GM12878 (cell line): ENCODE measurements at regions of chr3 and their contacts with region 1.

Region 1: DNA sequence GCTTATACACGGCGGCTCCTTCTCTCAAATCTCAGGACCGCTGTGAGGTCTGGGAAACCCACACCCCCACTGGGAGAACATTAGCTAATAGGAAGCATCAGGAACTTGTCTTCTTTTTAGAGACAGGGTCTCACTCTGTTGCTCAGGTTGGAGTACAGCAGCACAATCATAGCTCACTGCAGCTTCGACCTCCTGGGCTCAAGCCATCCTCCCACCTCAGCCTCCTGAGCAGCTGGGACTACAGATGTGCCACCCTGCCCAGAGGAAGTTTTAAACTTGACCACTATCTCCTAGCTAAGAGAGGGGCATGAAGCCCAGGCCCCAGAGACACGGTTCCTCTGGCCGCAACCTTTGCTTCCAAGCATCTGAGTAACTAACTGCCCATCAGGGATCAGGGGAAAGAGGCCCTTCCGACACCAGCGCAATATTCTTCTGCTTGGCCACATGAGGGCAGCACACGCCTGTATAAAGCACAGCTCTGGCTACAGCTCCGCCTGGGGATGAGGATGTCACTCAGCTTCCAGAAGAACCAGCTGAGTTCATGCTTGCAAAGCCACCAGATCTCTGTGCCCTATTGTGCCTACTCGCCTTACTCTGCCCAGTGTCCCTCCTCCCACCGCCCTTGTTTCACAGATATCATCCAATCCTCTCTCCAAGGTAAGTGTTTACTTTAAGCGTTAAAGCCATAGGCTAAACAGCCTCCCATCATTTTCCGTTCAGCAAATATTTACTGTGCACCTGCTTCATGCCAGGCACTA is 57.5 kb upstream of the SLC6A11 start:
- DNase-seq: peak; percentile 16
- ATAC-seq: peak; percentile 96
- H3K4me3 ChIP-seq: no peak overlapping the region
- H3K27ac ChIP-seq: no peak overlapping the region
- H3K4me1 ChIP-seq: no peaks in the 10 kb centered on the region
- H3K27me3 ChIP-seq: 0 out of 4 replicates have a peak, but pooled peaks cover 0 to 3% of the 10 kb centered on the region in 2 experiments
- CTCF ChIP-seq: peak; percentile 67 to 86 (median 73)
- EP300 ChIP-seq: no peak
- POLR2A ChIP-seq: no peak
- RAD21 ChIP-seq: peak; percentile 86

Region 2: DNA sequence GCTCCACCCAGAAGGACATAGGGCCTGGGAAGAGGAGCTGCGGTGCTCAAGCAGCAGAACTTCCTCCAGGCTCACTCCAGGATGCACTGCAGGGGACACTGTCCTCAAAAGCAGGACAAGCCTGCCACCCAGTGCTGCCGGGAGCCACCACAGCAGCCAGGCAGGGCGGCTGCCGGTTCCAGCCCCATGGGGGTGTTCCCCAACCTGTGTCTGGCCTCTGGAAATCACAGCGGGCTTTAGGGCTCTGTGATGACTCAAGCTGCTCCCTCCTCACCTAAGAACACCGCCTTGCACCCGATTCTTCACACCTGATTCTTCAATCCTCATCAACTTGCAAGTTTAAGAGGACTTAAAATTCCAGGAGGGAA is 14.4 kb before region 1 on chr3:
- CTCF ChIA-PET with region 1: interaction called, 15 read pairs
- POLR2A ChIA-PET with region 1: no interaction called
- RAD21 ChIA-PET with region 1: interaction called, 3 read pairs
- SMC1A ChIA-PET with region 1: interaction called, 4 read pairs
- in situ Hi-C with region 1: no loop called
- intact Hi-C with region 1: no loop called
- DNase-seq: no peak
- ATAC-seq: peak; percentile 47; the same call in 2 of the 3 replicates
- H3K4me3 ChIP-seq: no peak overlapping the region
- H3K27ac ChIP-seq: no peak overlapping the region
- H3K4me1 ChIP-seq: no peaks in the 10 kb centered on the region
- H3K27me3 ChIP-seq: no peaks in the 10 kb centered on the region; a peak in 1 of 4 replicates
- CTCF ChIP-seq: peak in 1 of 3 experiments; percentile 25; a peak in 1 of 6 replicates
- EP300 ChIP-seq: no peak
- POLR2A ChIP-seq: no peak
- RAD21 ChIP-seq: no peak

Region 3: GRCh38 chr3:10783357-10784351 is 25.2 kb after region 1 on chr3:
- CTCF ChIA-PET with region 1: interaction called, 14 read pairs
- POLR2A ChIA-PET with region 1: no interaction called
- RAD21 ChIA-PET with region 1: no interaction called
- SMC1A ChIA-PET with region 1: interaction called, 3 read pairs
- in situ Hi-C with region 1: no loop called
- intact Hi-C with region 1: no loop called
- DNase-seq: no peak
- ATAC-seq: peak; percentile 77
- H3K4me3 ChIP-seq: no peak overlapping the region
- H3K27ac ChIP-seq: no peak overlapping the region
- H3K4me1 ChIP-seq: no peaks in the 10 kb centered on the region
- H3K27me3 ChIP-seq: 0 out of 4 replicates have a peak, but pooled peaks cover 0 to 4% of the 10 kb centered on the region in 2 experiments
- CTCF ChIP-seq: peak; percentile 63 to 85 (median 82)
- EP300 ChIP-seq: no peak
- POLR2A ChIP-seq: no peak
- RAD21 ChIP-seq: peak; percentile 43

Region 4: DNA sequence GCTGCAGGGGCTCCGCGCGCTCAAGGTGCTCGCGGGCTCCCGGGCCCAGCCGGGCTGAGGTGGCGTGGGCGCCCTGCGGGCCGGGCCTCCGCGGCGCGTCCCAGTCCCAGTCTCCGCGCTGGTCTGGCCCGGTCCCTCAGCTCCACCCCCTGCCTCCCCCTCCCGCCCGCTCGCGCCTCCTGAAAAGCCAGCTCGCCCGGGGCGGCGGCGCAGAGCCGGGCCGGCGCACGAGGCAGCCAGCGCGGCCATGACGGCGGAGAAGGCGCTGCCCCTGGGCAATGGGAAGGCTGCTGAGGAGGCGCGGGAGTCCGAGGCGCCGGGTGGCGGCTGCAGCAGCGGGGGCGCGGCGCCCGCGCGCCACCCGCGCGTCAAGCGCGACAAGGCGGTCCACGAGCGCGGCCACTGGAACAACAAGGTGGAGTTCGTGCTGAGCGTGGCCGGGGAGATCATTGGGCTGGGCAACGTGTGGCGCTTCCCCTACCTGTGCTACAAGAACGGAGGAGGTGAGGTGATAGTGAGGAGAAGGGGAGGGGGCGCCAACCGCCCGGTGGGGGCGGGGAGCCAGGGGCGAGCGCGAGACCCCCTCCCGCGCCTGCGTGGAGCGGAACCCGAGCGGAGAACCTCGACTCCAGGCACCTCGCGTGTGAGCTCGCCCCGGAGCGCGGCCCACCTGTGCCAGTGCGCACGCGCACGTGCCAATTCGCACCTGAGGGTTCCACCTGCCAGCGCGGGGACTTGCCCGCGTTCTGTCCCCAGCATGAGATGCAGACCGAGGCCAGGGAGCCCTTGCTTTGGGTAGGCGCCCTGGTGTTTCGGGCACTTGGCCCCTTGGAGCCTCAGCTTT is 57.8 kb after region 1 on chr3 and contains the start of gene SLC6A11:
- CTCF ChIA-PET with region 1: no interaction called
- POLR2A ChIA-PET with region 1: no interaction called
- RAD21 ChIA-PET with region 1: no interaction called
- SMC1A ChIA-PET with region 1: no interaction called
- in situ Hi-C with region 1: no loop called
- intact Hi-C with region 1: no loop called
- DNase-seq: no peak
- ATAC-seq: no peak
- H3K4me3 ChIP-seq: no peak within 1 kb of the TSS
- H3K27ac ChIP-seq: no peak within 1 kb of the TSS
- H3K4me1 ChIP-seq: no peaks in the 10 kb centered on the region
- H3K27me3 ChIP-seq: peaks cover 0 to 3% of the 10 kb centered on the region in 2 experiments; a peak in 1 of 4 replicates
- CTCF ChIP-seq: no peak
- EP300 ChIP-seq: no peak
- POLR2A ChIP-seq: no peak
- RAD21 ChIP-seq: no peak
- polyA plus RNA-seq, gene SLC6A11: not detected

Region 5: GRCh38 chr3:10945683-10946287 is 187.3 kb after region 1 on chr3:
- CTCF ChIA-PET with region 1: interaction called, 11 read pairs
- POLR2A ChIA-PET with region 1: no interaction called
- RAD21 ChIA-PET with region 1: interaction called, 3 read pairs
- SMC1A ChIA-PET with region 1: no interaction called
- in situ Hi-C with region 1: no loop called
- intact Hi-C with region 1: no loop called
- DNase-seq: no peak
- ATAC-seq: peak; percentile 98
- H3K4me3 ChIP-seq: no peak overlapping the region
- H3K27ac ChIP-seq: no peak overlapping the region
- H3K4me1 ChIP-seq: no peaks in the 10 kb centered on the region
- H3K27me3 ChIP-seq: no peaks in the 10 kb centered on the region
- CTCF ChIP-seq: peak; percentile 64 to 86 (median 70)
- EP300 ChIP-seq: no peak
- POLR2A ChIP-seq: no peak
- RAD21 ChIP-seq: peak; percentile 48

Region 6: DNA sequence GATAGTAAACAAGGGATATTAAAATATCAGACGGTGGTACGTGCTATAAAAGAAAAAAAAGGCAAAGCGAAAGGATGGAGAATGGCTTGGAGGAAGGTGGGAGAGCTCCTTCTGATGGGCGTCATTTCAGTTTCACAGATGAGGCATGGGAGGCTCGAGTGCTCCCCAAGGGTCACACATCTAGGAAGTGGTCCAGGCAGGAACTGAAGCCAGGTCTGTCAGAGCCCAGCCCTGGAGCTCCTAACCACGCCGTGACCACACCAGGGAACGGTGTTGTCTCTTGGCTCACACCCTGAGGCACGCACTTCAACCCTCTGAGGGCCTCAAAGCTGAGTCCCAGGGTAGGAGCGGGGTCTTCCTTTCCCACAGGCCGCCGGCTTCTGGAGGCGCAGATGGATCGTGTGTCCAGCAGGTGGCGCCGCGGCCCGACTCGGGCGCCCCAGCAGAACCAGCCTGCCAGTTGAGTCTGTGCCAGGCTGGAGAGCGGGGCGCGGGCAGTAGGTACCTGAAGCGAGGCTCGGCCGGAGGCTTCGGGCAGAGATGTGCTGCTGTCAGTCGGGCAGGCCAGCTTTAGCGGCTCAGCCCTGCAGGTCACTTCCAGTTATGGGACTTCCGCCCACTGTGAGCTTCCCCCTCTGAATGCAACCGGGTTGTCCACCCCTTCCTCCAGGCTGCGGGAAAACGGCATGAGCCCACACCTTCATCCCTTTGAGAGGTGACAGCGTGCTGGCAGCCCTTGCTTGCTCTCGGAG is 302.2 kb after region 1 on chr3:
- CTCF ChIA-PET with region 1: interaction called, 5 read pairs
- POLR2A ChIA-PET with region 1: no interaction called
- RAD21 ChIA-PET with region 1: no interaction called
- SMC1A ChIA-PET with region 1: no interaction called
- in situ Hi-C with region 1: no loop called
- intact Hi-C with region 1: loop called (anchors 5 kb)
- DNase-seq: no peak
- ATAC-seq: peak; percentile 91
- H3K4me3 ChIP-seq: no peak overlapping the region
- H3K27ac ChIP-seq: no peak overlapping the region
- H3K4me1 ChIP-seq: no peaks in the 10 kb centered on the region
- H3K27me3 ChIP-seq: peaks cover 0 to 3% of the 10 kb centered on the region in 2 experiments; a peak in 2 of 4 replicates
- CTCF ChIP-seq: peak; percentile 59 to 71 (median 66)
- EP300 ChIP-seq: no peak
- POLR2A ChIP-seq: no peak
- RAD21 ChIP-seq: peak; percentile 41

Region 7: DNA sequence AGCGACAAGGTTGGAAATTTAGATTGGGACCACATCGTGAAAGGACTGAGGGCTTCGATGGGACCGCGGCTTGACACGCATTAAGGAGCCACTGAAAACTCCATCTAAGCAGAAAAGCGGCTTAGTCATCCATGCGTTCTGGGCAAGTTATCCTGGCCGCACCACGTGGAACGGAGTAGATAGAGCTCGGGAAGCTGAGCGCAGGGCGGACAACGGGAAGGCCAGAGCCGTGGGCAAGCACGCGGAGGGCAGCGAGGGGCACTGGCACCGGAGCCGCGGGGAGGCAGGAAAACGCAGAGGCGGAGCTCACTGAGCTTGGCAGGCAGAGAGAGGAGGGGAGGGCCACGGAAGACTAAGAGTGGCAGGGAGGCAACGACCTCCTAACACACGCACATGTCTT is 946.6 kb after region 1 on chr3:
- CTCF ChIA-PET with region 1: no interaction called
- POLR2A ChIA-PET with region 1: no interaction called
- RAD21 ChIA-PET with region 1: no interaction called
- SMC1A ChIA-PET with region 1: no interaction called
- in situ Hi-C with region 1: no loop called
- intact Hi-C with region 1: no loop called
- DNase-seq: no peak
- ATAC-seq: no peak
- H3K4me3 ChIP-seq: no peak overlapping the region
- H3K27ac ChIP-seq: no peak overlapping the region
- H3K4me1 ChIP-seq: no peaks in the 10 kb centered on the region
- H3K27me3 ChIP-seq: no peaks in the 10 kb centered on the region
- CTCF ChIP-seq: no peak
- EP300 ChIP-seq: no peak
- POLR2A ChIP-seq: no peak
- RAD21 ChIP-seq: no peak